ENCODE measurements at regions of chrX and their contacts with region 1.

Region 1: DNA sequence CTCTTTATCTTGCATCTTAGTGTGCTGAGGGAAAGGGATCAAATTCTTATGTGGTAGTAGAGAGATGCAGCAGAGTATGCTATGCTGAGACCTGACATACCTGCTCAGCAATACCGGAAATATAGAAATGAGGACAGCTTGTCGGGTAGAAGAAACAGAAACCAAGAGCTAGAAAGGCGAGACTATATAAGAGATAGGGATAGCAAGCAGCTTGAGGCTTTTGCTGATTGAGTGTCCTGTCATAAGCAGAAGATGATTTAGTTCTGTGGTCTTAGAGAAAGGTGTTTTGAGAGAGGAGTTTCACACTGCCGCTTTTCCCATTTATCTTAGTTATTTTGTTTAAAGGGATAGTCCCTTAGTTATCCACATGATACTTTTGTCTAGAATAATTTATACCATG is 31.7 kb downstream of the USP9X start:
- DNase-seq: no peak
- H3K4me3 ChIP-seq: no peak overlapping the region
- H3K27ac ChIP-seq: no peak overlapping the region
- H3K4me1 ChIP-seq: peaks cover 16% of the 10 kb centered on the region
- H3K27me3 ChIP-seq: no peaks in the 10 kb centered on the region
- CTCF ChIP-seq: no peak
- POLR2A ChIP-seq: no peak

Region 2: DNA sequence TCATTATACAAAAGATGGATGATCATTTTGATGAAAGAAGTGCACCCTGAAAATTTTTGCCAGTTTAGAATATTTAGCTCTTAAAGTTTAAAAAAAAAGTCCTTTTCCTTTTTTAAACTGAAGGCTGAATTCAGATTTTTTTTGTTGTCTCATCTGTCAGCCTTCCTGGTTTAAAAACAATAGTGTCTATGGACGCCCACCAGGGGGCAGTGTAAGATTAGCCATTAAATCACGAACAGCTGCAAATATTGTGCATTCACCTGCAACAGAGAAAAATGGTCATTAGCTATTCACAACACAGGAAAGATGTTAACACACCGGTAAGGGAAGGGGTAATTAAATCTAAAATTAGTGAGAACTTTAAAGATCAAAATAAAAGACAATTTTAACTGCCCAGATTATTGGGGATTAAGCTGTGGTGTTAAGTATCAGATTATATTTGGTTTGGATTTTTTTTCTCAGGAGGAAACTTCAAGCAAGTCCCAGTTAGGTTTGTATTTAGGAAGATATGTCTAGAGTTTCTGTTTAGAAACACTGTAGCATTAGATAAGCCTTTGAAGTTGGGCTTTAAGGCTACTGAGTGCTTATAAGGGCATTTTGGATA is 465.2 kb before region 1 on chrX:
- intact Hi-C with region 1: loop called (anchors 10 kb)
- DNase-seq: no peak
- H3K4me3 ChIP-seq: no peak overlapping the region
- H3K27ac ChIP-seq: no peak overlapping the region
- H3K4me1 ChIP-seq: peaks cover 8% of the 10 kb centered on the region
- H3K27me3 ChIP-seq: no peaks in the 10 kb centered on the region
- CTCF ChIP-seq: peak; percentile 81 to 85 (median 84)
- POLR2A ChIP-seq: no peak

Region 3: DNA sequence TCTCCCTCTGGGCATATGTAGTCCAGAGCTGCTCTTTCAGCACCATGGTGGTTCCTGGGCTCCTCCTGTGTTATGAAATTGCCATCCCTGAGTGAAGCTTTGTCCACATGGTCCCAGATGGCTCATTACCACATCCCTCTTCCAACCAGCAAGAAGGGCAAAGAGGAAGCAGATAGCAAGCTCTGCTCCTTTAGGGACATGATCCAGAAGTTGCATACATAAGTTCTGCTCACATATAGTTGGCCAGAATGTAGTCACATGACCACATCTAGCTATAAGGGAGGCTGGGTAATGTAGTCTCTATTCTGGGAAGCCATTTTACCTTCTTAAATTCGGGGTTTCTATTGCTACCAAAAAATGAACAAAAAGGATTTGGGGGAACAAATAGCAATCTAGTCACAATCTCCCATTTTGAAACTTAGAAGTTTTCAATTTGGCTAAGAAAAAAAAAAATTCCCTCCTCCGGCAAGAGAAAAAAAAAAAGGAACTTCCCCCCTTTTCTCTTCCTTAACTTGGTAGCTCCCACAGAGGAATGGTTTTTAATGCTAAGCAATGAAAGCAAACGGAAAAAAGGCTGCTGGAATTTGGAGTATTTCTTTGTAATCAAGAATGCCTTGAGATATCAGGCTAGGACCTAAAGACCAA is 119.9 kb before region 1 on chrX:
- intact Hi-C with region 1: no loop called
- DNase-seq: no peak
- H3K4me3 ChIP-seq: no peak overlapping the region
- H3K27ac ChIP-seq: no peak overlapping the region
- H3K4me1 ChIP-seq: no peaks in the 10 kb centered on the region
- H3K27me3 ChIP-seq: no peaks in the 10 kb centered on the region
- CTCF ChIP-seq: no peak
- POLR2A ChIP-seq: no peak